MCF 10A (cell line): ENCODE measurements at regions of chr9 and their contacts with region 1.

Region 1: DNA sequence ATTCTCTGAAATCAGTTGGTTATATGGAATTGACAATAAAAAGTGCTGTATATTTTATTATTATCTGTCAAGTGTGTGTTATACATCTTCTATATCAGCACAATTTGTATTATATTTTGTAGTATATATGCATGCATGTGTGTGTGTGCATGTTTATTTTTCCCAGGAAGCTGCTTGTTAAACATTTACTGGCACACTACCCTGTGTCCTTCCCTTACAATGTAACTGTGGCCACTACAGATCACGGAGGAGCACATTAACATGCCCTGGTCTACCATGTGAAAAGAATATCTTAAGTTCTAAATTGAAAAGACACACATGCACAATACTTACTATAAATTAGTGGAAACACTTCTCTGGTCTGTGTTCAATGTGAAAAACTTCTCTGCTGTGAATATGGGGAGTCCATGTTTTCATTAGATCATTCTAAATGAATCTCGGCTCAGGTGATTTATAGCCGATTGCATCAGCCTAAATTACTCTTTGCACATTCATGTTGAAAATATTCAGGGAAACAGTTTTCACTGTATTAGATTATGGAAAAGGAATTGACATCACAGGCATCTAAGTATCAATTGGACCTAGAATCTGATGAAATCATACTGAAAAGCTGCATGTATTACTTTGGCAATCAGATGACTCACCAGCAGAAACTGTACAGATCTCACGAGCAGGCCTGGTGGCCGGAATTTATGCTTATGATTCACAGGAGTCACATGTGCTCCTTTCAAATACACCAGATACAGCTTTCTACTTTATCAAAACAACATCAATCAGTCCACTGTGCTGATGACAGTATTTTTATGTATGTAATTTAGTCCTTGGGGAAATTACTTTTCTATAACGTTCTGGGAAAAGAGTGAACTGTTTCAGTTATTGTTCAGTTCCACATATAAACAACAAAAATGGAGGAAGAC is 39.4 kb downstream of the LURAP1L start:
- DNase-seq: peak; percentile 99
- H3K4me3 Mint-ChIP-seq: peak overlapping the region; percentile 71
- H3K27ac Mint-ChIP-seq: peak overlapping the region; percentile 97
- H3K4me1 Mint-ChIP-seq: peaks cover 71% of the 10 kb centered on the region
- H3K27me3 Mint-ChIP-seq: no peaks in the 10 kb centered on the region
- CTCF ChIP-seq: peak; percentile 7

Region 2: DNA sequence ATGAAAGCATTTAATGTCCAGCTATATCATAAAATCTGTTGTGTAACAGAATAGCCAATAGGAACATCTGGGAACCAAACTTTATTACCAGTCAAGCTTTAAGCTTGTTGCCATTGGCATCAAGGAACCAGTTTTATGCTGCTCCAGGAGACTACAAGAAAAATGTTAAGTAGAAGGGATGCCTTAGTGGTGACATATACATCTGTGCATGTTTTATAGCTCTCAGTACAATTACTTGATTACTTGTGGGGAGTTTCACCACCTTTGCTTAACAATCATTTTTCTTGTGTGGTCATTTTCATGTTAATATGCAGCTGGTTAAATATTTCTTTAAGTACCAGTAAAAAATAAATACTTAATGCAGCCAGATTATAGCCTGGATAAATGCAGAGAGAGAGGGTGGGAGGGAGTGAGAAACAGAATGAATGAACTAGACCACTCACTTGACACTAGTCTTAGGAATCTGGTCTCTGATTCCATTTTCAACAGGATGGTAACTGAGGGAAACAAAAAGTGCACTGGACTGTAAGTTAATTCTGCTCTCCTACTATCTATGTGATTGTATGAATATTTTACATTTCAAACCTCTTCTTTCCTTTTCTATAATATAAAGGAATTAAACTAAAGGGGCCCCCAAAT is 75.1 kb before region 1 on chr9:
- CTCF ChIA-PET with region 1: interaction called, 3 read pairs
- POLR2A ChIA-PET with region 1: interaction called, 14 read pairs
- intact Hi-C with region 1: no loop called
- DNase-seq: no peak
- H3K4me3 Mint-ChIP-seq: no peak overlapping the region
- H3K27ac Mint-ChIP-seq: no peak overlapping the region
- H3K4me1 Mint-ChIP-seq: peaks cover 12% of the 10 kb centered on the region
- H3K27me3 Mint-ChIP-seq: no peaks in the 10 kb centered on the region
- CTCF ChIP-seq: no peak

Region 3: DNA sequence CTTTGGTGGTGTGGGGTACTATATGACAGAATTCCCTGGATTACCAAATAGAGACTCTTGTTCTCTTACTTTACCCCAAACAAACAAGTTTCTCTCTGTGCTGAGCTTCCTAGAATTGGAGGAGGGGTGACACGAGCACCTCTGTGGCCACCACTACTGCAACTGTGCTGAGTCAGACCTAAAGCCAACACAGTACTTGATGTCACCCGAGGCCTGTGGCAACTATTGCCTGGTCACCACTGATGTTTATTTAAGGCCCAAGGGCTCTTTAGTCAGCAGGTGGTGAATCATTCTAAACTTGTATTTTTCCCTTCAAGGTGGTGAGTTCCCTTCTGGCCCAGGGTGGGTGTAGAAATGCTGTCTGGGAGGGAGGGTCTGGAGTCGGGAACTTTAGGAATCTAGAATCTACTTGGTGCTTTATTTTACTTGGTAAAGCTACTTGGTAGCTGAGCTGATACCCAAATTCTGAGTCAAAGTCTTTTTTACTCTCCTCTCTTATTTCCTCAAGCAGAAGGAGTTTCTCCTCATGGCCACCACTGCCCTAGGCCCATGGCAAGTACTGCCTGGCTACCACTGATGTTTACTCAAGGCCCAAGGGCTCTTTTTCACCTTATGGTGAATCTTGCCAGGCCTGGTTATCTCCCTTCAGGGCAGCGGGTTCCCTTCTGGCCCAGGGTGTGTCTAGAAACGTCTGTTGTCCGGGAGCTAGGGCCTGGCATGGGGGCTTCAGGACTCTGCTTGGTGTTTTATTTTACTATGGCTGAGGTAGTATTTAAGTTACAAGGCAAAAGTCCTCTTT is 29.6 kb before region 1 on chr9:
- CTCF ChIA-PET with region 1: interaction called, 5 read pairs
- POLR2A ChIA-PET with region 1: interaction called, 54 read pairs
- intact Hi-C with region 1: loop called (anchors 1 kb)
- DNase-seq: peak; percentile 95
- H3K4me3 Mint-ChIP-seq: peak overlapping the region; percentile 36
- H3K27ac Mint-ChIP-seq: peak overlapping the region; percentile 99
- H3K4me1 Mint-ChIP-seq: peaks cover 48% of the 10 kb centered on the region
- H3K27me3 Mint-ChIP-seq: no peaks in the 10 kb centered on the region
- CTCF ChIP-seq: no peak

Region 4: GRCh38 chr9:12794101-12794799 is 20.0 kb before region 1 on chr9:
- CTCF ChIA-PET with region 1: interaction called, 13 read pairs
- POLR2A ChIA-PET with region 1: interaction called, 94 read pairs
- intact Hi-C with region 1: no loop called
- DNase-seq: peak; percentile 58
- H3K4me3 Mint-ChIP-seq: no peak overlapping the region
- H3K27ac Mint-ChIP-seq: peak overlapping the region; percentile 82
- H3K4me1 Mint-ChIP-seq: peaks cover 46% of the 10 kb centered on the region
- H3K27me3 Mint-ChIP-seq: no peaks in the 10 kb centered on the region
- CTCF ChIP-seq: no peak

Region 5: GRCh38 chr9:12801663-12802062 is 12.6 kb before region 1 on chr9:
- CTCF ChIA-PET with region 1: interaction called, 13 read pairs
- POLR2A ChIA-PET with region 1: interaction called, 94 read pairs
- intact Hi-C with region 1: no loop called
- DNase-seq: no peak
- H3K4me3 Mint-ChIP-seq: no peak overlapping the region
- H3K27ac Mint-ChIP-seq: no peak overlapping the region
- H3K4me1 Mint-ChIP-seq: peaks cover 25% of the 10 kb centered on the region
- H3K27me3 Mint-ChIP-seq: no peaks in the 10 kb centered on the region
- CTCF ChIP-seq: no peak

Region 6: GRCh38 chr9:12859704-12860251 is 45.6 kb after region 1 on chr9:
- CTCF ChIA-PET with region 1: interaction called, 5 read pairs
- POLR2A ChIA-PET with region 1: interaction called, 9 read pairs
- intact Hi-C with region 1: loop called (anchors 1 kb)
- DNase-seq: peak; percentile 90
- H3K4me3 Mint-ChIP-seq: peak overlapping the region; percentile 71
- H3K27ac Mint-ChIP-seq: peak overlapping the region; percentile 86
- H3K4me1 Mint-ChIP-seq: peaks cover 24% of the 10 kb centered on the region
- H3K27me3 Mint-ChIP-seq: no peaks in the 10 kb centered on the region
- CTCF ChIP-seq: no peak

Region 7: DNA sequence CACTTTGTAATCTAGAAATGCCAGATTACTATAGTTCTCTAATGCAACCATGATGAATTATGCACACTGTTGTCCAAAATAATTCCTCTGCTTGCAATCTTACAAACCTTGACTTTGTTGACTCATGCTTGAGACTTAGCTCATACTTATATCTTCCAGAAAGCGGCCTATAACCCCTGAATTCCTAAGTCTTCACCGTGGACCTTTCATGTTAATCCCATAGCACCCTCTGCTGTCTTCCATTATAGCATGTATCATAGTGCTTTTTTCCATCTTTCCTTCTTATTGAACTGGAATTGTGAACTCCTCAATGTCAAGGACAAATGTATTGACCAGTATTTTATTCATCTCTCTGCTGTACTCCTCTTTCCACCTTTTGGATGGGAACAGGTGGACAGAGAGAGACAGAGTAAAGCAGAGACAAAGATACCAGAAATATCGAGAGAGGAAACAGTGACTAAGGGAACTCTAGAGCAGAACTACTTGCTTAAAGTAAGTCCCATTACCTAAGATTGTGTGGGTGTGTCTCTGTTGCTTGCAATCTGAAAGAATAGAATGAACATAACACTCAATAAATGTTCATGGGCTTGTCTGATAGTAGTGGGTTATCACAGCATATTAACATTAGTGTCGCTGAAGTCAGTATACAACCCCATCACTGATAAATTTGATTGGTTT is 70.7 kb after region 1 on chr9:
- CTCF ChIA-PET with region 1: interaction called, 8 read pairs
- POLR2A ChIA-PET with region 1: interaction called, 5 read pairs
- intact Hi-C with region 1: loop called (anchors 1 kb)
- DNase-seq: peak; percentile 84
- H3K4me3 Mint-ChIP-seq: no peak overlapping the region
- H3K27ac Mint-ChIP-seq: no peak overlapping the region
- H3K4me1 Mint-ChIP-seq: peaks cover 13% of the 10 kb centered on the region
- H3K27me3 Mint-ChIP-seq: no peaks in the 10 kb centered on the region
- CTCF ChIP-seq: peak; percentile 62